Transverse colon (tissue), 4 donors: ENCODE measurements at regions of chr16 and their contacts with region 1.

Region 1: GRCh38 chr16:72474501-72475123 is 302.7 kb upstream of the PMFBP1 start:
- DNase-seq: no peak
- H3K4me3 ChIP-seq: no peak overlapping the region
- H3K27ac ChIP-seq: no peak overlapping the region
- H3K4me1 ChIP-seq: no peaks in the 10 kb centered on the region
- H3K27me3 ChIP-seq: no peaks in the 10 kb centered on the region
- CTCF ChIP-seq: no peak
- EP300 ChIP-seq: no peak
- POLR2A ChIP-seq: no peak

Region 2: DNA sequence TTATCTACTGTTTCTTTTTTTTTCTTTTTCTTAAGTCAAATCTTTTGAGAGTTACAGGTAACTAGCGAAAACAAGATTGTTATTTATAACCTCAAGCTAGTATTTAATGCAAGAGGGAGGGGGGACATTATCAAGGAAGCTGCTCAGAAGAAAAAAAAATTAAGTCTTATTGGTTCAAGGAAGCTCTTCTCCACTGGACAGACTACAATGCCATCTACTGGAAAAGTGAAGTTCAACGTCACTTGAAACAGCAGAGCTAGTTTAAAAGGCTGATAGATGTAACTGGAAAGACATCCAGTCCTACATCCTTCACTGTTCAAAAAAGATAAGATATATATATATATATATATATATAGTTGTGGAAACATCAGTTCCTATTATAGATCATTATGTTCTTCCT is 1404.0 kb after region 1 on chr16:
- in situ Hi-C with region 1: loop called in 1 of 4 experiments (anchors 25 kb)
- intact Hi-C with region 1: no loop called
- DNase-seq: no peak
- H3K4me3 ChIP-seq: no peak overlapping the region
- H3K27ac ChIP-seq: no peak overlapping the region
- H3K4me1 ChIP-seq: peaks cover 0 to 2% (median 0%) of the 10 kb centered on the region in 4 donors
- H3K27me3 ChIP-seq: no peaks in the 10 kb centered on the region
- CTCF ChIP-seq: peak; percentile 42 to 59 (median 47)
- EP300 ChIP-seq: no peak
- POLR2A ChIP-seq: no peak